Body of pancreas (tissue), 4 donors: ENCODE measurements at regions of chr14 and their contacts with region 1.

Region 1: DNA sequence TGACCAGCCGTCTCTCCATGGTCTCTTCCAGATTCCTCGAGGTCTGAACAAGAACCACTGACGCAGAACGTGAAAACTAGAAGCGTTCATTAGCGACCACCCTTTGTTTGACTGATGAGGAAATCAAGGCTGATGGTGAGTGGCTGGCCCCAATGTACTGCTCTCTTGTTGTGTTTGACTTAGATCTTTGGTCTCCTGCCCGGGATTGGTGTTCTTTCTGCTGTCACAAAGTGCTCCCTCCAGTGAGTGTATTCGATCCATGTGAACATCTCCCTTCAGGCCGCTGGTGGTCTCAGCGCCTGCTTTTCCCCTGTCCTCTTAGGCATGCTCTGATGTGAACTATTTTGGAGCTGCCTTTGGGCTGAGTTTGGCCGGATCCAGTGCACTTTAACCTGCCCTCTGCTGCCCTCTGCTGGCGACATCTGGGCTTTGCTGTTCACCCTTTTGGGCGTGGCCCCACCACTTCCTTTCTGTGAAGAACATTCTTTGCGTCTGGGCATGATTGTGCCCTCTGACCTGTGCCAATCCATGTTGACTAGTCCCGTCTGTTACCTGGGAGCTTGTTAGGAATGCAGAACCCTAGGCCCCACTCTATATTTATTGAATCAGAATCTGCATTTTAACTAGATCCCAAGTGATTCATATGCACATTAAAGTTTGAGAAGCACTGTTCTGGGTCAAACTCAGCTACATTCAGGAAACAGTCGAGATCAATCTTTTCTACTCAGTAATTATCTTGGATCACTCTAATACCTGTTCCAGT is 279.2 kb downstream of the TTC6 start:
- DNase-seq: peak; percentile 81 to 89 (median 85)
- ATAC-seq: peak; percentile 91
- H3K4me3 ChIP-seq: no peak overlapping the region
- H3K27ac ChIP-seq: no peak overlapping the region
- H3K4me1 ChIP-seq: peaks cover 5% of the 10 kb centered on the region
- H3K27me3 ChIP-seq: no peaks in the 10 kb centered on the region
- CTCF ChIP-seq: peak; percentile 73 to 86 (median 84)
- POLR2A ChIP-seq: no peak

Region 2: DNA sequence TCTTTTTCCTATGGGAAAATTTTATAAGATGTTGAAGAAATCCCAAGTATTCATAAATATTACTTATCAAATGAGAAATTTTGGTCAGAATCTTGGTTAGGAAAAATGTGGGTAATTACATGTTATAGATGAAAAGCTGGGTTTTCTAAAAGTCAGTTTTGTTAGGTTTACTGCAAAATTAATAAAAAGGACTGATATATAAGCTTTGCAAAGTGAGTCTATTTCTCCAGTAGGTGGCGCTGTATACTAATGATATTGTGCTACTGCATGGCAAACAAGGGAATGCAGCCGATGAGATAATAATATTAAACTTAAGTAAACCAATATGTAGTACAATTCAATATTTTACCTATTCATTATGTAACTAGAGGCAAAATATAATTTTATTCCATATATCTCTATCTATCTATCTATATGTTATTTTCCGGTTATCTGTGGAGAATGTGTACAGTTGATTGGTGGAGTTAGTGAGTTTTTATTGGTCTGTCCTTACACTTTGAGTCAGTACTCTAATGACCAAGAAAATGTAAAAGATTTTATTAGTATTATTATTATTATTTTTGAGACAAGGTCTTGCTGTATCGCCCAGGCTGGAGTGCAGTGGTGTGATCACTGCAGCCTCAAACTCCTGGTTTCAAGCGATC is 643.9 kb before region 1 on chr14:
- intact Hi-C with region 1: loop called (anchors 10 kb)
- DNase-seq: peak in 2 of 4 donors; percentile 10 to 56
- ATAC-seq: peak; percentile 53
- H3K4me3 ChIP-seq: no peak overlapping the region
- H3K27ac ChIP-seq: no peak overlapping the region
- H3K4me1 ChIP-seq: no peaks in the 10 kb centered on the region
- H3K27me3 ChIP-seq: peaks cover 0 to 3% of the 10 kb centered on the region in 2 donors
- CTCF ChIP-seq: peak; percentile 45 to 95 (median 64)
- POLR2A ChIP-seq: no peak

Region 3: GRCh38 chr14:37369425-37369824 is 505.2 kb before region 1 on chr14:
- intact Hi-C with region 1: no loop called
- DNase-seq: no peak
- ATAC-seq: no peak
- H3K4me3 ChIP-seq: no peak overlapping the region
- H3K27ac ChIP-seq: no peak overlapping the region
- H3K4me1 ChIP-seq: no peaks in the 10 kb centered on the region
- H3K27me3 ChIP-seq: no peaks in the 10 kb centered on the region
- CTCF ChIP-seq: no peak
- POLR2A ChIP-seq: no peak

Region 4: GRCh38 chr14:37709419-37710195 is 165.0 kb before region 1 on chr14:
- intact Hi-C with region 1: loop called (anchors 10 kb)
- DNase-seq: no peak
- ATAC-seq: no peak
- H3K4me3 ChIP-seq: no peak overlapping the region
- H3K27ac ChIP-seq: no peak overlapping the region
- H3K4me1 ChIP-seq: no peaks in the 10 kb centered on the region
- H3K27me3 ChIP-seq: no peaks in the 10 kb centered on the region
- CTCF ChIP-seq: peak in 6 of 7 experiments; percentile 19 to 43 (median 36)
- POLR2A ChIP-seq: no peak

Region 5: GRCh38 chr14:37729218-37729617 is 145.4 kb before region 1 on chr14:
- intact Hi-C with region 1: no loop called
- DNase-seq: no peak
- ATAC-seq: no peak
- H3K4me3 ChIP-seq: no peak overlapping the region
- H3K27ac ChIP-seq: no peak overlapping the region
- H3K4me1 ChIP-seq: no peaks in the 10 kb centered on the region
- H3K27me3 ChIP-seq: no peaks in the 10 kb centered on the region
- CTCF ChIP-seq: no peak
- POLR2A ChIP-seq: no peak